ENCODE measurements at regions of chr12 and their contacts with region 1.

Region 1: GRCh38 chr12:76348079-76348901 is at the start of gene BBS10:
- DNase-seq: peak; percentile 95
- H3K4me3 ChIP-seq: peak within 1 kb of the TSS; percentile 65 to 86 (median 82)
- H3K27ac ChIP-seq: peak within 1 kb of the TSS; percentile 87 to 90 (median 90)
- H3K4me1 ChIP-seq: peaks cover 0 to 20% (median 14%) of the 10 kb centered on the region in 4 donors
- H3K27me3 ChIP-seq: no peaks in the 10 kb centered on the region
- CTCF ChIP-seq: peak in 3 of 4 experiments; percentile 16 to 35 (median 29)
- EP300 ChIP-seq: no peak
- POLR2A ChIP-seq: peak in 1 of 2 donors; percentile 16
- total RNA-seq, gene BBS10: 6.1 to 15.0 (median 12.9) TPM

Region 2: DNA sequence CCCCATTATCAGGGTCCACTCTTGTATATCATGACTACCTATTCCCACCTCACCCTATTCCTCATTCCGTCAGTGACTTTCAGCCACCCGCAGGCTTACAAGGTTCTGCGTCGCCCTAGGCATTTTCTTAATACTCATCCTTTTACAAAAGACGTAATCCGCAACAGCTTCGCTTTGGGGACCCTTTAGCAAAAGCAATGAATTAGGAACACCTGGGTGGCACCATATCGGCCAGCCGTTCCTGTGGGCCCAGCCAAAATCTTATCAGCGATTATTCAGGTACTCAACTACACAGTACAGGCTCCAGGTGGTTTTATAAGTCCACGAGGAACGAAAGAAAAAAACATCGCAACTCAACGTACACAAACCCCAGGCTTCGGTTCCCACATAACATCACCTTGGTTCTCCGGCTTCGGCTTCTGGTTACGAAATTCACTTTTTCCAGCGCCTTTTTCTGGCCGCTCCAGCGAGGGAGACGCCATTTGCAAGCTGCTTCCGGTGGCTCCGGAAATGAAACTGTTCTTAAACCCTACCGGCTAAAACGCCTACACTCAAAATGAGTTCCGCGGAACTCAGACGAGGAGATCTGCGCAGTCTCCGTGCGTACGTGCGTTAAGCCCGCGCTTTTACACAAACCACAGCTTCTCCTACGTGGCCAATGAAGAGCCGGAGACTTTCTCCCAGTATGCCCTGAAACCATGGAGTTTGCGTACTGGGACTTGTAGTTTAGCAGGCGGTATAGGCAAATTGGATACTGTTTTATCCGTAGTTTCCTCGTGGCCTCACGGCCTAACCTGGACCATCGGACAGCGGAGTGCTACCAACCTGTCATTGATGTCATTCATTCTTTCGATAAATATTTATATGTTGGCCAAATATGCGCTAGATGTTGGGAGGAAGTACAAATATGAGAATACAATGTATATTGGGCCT is 836.9 kb before region 1 on chr12 and contains the start of gene KRR1:
- intact Hi-C with region 1: loop called (anchors 10 kb)
- DNase-seq: peak; percentile 97
- H3K4me3 ChIP-seq: peak within 1 kb of the TSS; percentile 75 to 90 (median 84)
- H3K27ac ChIP-seq: peak within 1 kb of the TSS; percentile 77 to 81 (median 77)
- H3K4me1 ChIP-seq: peaks cover 0 to 21% (median 17%) of the 10 kb centered on the region in 4 donors
- H3K27me3 ChIP-seq: no peaks in the 10 kb centered on the region
- CTCF ChIP-seq: no peak
- EP300 ChIP-seq: no peak
- POLR2A ChIP-seq: peak in 1 of 2 donors; percentile 32
- total RNA-seq, gene KRR1: 12.7 to 40.0 (median 29.5) TPM

Region 3: DNA sequence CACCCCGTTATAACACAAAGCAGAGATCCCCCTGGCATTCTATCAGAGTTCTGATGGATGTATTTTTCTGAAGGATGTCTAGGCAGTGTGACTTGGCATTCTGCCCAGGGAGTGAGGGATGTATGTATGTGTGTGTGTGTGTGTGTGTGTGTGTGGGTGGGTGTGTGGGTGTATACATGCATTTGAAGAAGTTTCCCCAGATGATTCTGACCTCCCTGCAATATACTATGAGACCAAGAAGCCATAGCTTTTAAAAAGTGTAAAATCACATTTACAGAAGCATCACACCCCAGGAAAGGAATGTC is 204.1 kb before region 1 on chr12:
- intact Hi-C with region 1: no loop called
- DNase-seq: no peak
- H3K4me3 ChIP-seq: no peak overlapping the region
- H3K27ac ChIP-seq: no peak overlapping the region
- H3K4me1 ChIP-seq: no peaks in the 10 kb centered on the region
- H3K27me3 ChIP-seq: no peaks in the 10 kb centered on the region
- CTCF ChIP-seq: no peak
- EP300 ChIP-seq: no peak
- POLR2A ChIP-seq: no peak

Region 4: GRCh38 chr12:76417116-76417515 is 68.8 kb after region 1 on chr12:
- intact Hi-C with region 1: no loop called
- DNase-seq: no peak
- H3K4me3 ChIP-seq: no peak overlapping the region
- H3K27ac ChIP-seq: no peak overlapping the region
- H3K4me1 ChIP-seq: peaks cover 0 to 6% (median under 1%) of the 10 kb centered on the region in 4 donors
- H3K27me3 ChIP-seq: no peaks in the 10 kb centered on the region
- CTCF ChIP-seq: no peak
- EP300 ChIP-seq: no peak
- POLR2A ChIP-seq: no peak

Region 5: GRCh38 chr12:76559400-76560085 is 211.3 kb after region 1 on chr12 and contains the start of gene OSBPL8:
- intact Hi-C with region 1: loop called (anchors 1 kb)
- DNase-seq: peak; percentile 97
- H3K4me3 ChIP-seq: peak within 1 kb of the TSS; percentile 72 to 90 (median 80)
- H3K27ac ChIP-seq: peak within 1 kb of the TSS; percentile 90 to 93 (median 92)
- H3K4me1 ChIP-seq: peaks cover 0 to 23% (median 14%) of the 10 kb centered on the region in 4 donors
- H3K27me3 ChIP-seq: no peaks in the 10 kb centered on the region
- CTCF ChIP-seq: peak in 1 of 4 experiments; percentile 30
- EP300 ChIP-seq: no peak
- POLR2A ChIP-seq: peak; percentile 39 to 64
- total RNA-seq, gene OSBPL8: 44.8 to 64.3 (median 52.3) TPM

Measured in sigmoid colon (tissue), 7 donors.